ENCODE measurements at regions of chr4 and their contacts with region 1.

Region 1: GRCh38 chr4:128454281-128455075 is 166.9 kb upstream of the PGRMC2 start:
- DNase-seq: peak; percentile 84
- ATAC-seq: peak; percentile 98
- H3K4me3 Mint-ChIP-seq: no peak overlapping the region
- H3K27ac Mint-ChIP-seq: no peak overlapping the region
- H3K4me1 Mint-ChIP-seq: peaks cover 11% of the 10 kb centered on the region
- H3K27me3 Mint-ChIP-seq: peaks cover 2% of the 10 kb centered on the region

Region 2: GRCh38 chr4:128483816-128484215 is 29.3 kb after region 1 on chr4:
- CTCF ChIA-PET with region 1: no interaction called
- POLR2A ChIA-PET with region 1: no interaction called
- intact Hi-C with region 1: no loop called
- DNase-seq: no peak
- ATAC-seq: no peak
- H3K4me3 Mint-ChIP-seq: no peak overlapping the region
- H3K27ac Mint-ChIP-seq: no peak overlapping the region
- H3K4me1 Mint-ChIP-seq: no peaks in the 10 kb centered on the region
- H3K27me3 Mint-ChIP-seq: peaks cover 2% of the 10 kb centered on the region

Region 3: DNA sequence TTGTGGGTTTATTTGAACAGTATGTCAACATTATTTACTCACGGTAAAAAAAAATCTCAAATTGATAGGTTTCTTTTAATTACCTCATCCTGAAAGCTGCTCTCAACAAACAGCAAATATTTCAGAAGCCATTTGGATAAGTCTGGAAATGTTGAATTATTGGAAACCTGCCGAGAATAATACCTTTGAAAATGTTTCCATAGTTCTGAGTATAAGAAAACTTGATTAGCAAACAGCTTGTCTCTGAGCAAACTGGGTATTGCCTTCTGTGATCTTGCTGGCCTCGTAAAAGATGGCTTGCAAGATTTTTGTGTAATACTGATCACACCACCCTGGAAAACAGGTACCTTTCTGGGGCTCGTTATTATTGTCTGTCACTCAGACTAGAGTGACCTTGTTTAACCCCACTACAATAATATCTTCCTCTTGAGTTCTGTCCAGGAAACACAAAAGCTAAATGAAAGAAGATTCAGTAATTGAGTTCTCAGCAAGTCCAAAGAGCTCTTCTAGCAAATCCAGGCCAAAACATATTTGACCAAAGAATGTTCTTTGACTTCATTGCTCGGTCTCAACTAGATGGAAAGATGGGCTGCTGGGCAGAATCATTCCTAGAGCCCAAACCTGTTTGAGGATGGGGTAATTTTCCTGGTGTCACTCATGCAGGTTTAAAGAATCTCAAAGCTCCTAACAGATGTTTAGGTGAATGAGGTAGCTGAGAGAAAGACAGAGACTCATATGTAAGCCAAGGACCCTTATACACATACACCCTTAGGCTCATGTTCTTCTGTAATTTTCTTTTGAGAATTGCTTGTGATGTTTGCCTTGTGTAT is 99.4 kb after region 1 on chr4:
- CTCF ChIA-PET with region 1: interaction called, 4 read pairs
- POLR2A ChIA-PET with region 1: no interaction called
- intact Hi-C with region 1: loop called in 1 of 2 experiments (anchors 5 kb)
- DNase-seq: no peak
- ATAC-seq: peak; percentile 8
- H3K4me3 Mint-ChIP-seq: peak overlapping the region; percentile 76
- H3K27ac Mint-ChIP-seq: no peak overlapping the region
- H3K4me1 Mint-ChIP-seq: peaks cover 13% of the 10 kb centered on the region
- H3K27me3 Mint-ChIP-seq: peaks cover 8% of the 10 kb centered on the region

Region 4: GRCh38 chr4:128574706-128575105 is 120.2 kb after region 1 on chr4:
- CTCF ChIA-PET with region 1: interaction called, 12 read pairs
- POLR2A ChIA-PET with region 1: no interaction called
- intact Hi-C with region 1: no loop called
- DNase-seq: peak; percentile 87
- ATAC-seq: peak; percentile 84
- H3K4me3 Mint-ChIP-seq: no peak overlapping the region
- H3K27ac Mint-ChIP-seq: no peak overlapping the region
- H3K4me1 Mint-ChIP-seq: no peaks in the 10 kb centered on the region
- H3K27me3 Mint-ChIP-seq: no peaks in the 10 kb centered on the region

Measured in activated CD4-positive, alpha-beta T cell treated with anti-CD3 and anti-CD28 coated beads for 36 hours (primary cell).